ENCODE measurements at regions of chr6 and their contacts with region 1.

Region 1: DNA sequence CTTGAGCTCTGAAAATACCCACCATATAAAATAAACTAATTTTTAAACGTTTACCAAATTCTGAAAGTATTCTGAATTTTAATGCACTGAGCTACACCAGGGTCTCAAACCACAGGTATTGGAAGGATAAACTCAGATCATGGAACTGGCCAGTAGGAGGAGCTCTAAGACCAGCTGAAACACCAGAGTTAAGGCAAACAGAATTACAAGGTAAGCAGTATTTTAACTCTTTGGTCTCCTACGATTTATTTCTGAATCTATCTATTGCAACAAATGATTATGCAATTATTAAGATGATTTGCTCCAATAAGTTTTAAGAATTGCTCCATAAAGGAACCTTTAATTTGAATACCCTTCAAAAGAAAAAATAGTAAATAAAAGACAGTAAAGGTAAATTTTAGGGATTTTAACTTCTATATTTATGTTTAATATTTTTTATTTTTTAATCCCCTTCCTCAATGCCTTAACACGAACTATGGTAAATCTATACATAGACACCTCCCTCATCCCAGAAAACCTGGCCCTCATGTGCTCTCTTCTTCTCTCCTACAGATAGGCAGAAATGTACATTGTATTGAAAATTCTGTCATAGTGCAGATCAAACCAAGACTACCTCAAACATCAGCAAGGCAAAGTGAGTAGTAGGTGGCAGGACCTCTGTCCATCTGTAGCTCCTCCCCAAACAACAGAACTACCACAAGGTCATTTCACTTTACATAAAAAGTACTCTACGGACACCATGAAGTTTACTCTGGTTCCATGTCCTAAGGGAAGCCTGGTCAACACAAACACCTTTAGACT is 58.4 kb downstream of the SMLR1 start:
- DNase-seq: peak; percentile 57
- H3K27ac ChIP-seq: no peak overlapping the region
- CTCF ChIP-seq: peak; percentile 86

Region 2: DNA sequence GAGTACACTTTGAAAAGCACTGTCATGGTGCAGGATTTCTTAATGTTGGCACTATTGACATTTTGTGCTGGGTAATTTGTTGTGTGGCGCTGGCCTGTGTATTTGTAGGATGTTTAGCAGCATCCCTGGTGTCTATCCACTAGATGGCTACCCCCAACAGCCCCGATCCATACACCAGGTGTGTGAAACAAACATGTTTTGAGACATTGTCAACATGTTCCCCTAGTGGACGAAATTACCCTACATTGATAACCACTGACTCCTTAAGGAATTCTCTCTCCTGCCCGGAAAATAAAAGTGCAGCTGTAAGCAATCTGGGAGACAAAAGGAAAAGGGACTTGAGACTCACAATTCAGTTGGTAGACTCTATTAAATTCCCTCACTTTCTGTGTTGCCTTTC is 572.4 kb before region 1 on chr6:
- CTCF ChIA-PET with region 1: interaction called, 12 read pairs
- POLR2A ChIA-PET with region 1: no interaction called
- DNase-seq: no peak
- H3K27ac ChIP-seq: no peak overlapping the region
- CTCF ChIP-seq: no peak

Region 3: DNA sequence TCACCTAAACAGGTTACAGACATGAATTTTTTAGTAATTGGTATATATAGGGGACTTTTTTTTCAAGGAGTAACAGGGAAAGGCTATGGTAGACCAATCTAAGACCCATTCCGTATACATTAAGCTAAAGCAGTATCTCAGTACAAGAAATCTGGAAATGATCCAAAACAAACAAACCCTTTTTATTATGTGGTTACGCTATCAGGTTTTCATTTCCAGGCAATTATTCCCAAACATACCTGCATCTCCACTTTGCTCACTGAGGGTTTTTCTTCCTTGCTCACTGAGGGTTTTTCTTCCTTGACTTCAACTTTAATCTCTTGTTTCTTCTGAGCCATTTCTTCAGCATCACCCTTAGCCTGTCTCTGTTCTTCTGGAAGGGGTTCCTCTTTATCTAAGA is 70.2 kb after region 1 on chr6:
- CTCF ChIA-PET with region 1: no interaction called
- POLR2A ChIA-PET with region 1: no interaction called
- DNase-seq: no peak
- H3K27ac ChIP-seq: no peak overlapping the region
- CTCF ChIP-seq: no peak

Region 4: GRCh38 chr6:131116749-131117360 is 231.3 kb after region 1 on chr6:
- CTCF ChIA-PET with region 1: interaction called, 39 read pairs
- POLR2A ChIA-PET with region 1: no interaction called
- DNase-seq: peak; percentile 44
- H3K27ac ChIP-seq: no peak overlapping the region
- CTCF ChIP-seq: peak; percentile 62